Activated CD4-positive, alpha-beta T cell treated with anti-CD3 and anti-CD28 coated beads, Interleukin-2, amount 10 ng/mL, durations not matched to agents 24 days and 14 days (primary cell): ENCODE measurements at regions of chr6 and their contacts with region 1.

Region 1: DNA sequence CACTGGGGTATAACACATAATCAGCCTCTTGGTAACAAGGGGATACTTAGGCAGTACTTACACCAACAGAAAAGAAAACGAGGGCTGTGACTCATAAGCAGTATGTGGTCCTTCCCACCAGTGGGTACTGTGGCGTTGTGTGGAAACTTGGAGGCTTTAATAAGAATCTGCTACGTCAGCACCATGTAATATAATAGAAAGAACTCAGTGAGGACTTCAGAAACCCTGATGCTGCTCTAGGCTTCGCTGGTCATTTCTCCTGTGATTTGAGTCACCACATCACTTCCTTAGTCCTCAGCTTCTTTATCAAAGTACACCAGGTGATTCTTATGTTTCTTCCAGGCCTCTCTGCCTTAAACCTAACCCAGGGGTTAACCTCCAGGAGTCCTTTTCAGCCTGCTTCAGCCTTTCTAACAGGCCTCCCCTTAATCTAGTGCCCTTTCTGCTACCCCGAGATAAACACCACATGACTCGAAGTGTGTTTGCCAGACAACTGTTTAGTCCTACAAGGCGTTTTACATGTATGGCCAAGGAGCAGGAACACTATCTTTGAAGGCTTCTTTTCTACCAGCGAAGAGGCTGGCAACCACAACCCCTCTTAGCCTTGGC is 68.5 kb downstream of the FYN start:
- DNase-seq: peak; percentile 90
- H3K4me3 Mint-ChIP-seq: peak overlapping the region; percentile 82
- H3K27ac Mint-ChIP-seq: peak overlapping the region; percentile 99
- H3K4me1 Mint-ChIP-seq: peaks cover 82% of the 10 kb centered on the region
- H3K27me3 Mint-ChIP-seq: no peaks in the 10 kb centered on the region

Region 2: DNA sequence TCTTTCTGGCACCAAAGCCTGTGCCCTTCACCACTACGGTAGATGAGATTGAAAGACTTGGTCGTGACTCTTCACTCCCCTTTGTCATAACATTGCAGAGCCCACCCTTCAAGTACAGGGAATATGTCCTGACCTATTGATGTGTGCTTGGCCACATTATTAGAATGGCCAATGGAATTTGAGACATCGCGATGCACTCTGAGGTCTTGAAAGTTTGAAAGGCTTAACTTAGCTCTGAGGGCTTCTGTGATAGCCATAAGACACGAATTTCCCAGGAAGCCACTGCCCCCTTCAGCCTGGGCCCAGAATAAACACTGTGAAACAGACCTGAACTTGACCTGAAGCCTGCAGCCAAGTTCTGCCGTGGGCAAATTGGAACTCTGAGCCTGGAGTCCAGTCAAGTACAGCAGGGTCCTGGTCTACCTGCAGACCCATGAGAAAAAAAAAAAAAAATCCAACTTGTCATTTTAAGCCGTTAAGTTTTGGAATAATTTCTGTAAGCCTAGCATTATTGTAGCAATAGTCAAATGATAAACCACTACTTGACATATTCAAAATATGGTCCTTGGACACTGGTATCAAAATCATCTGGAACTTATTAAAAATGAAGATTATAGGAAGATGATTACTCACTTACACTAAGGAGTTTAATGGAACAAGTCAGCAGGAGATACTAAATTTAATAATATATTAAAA is 162.1 kb before region 1 on chr6:
- intact Hi-C with region 1: no loop called
- DNase-seq: peak; percentile 81
- H3K4me3 Mint-ChIP-seq: no peak overlapping the region
- H3K27ac Mint-ChIP-seq: no peak overlapping the region
- H3K4me1 Mint-ChIP-seq: no peaks in the 10 kb centered on the region
- H3K27me3 Mint-ChIP-seq: no peaks in the 10 kb centered on the region

Region 3: GRCh38 chr6:111709615-111710398 is 94.9 kb before region 1 on chr6:
- intact Hi-C with region 1: loop called (anchors 2 kb)
- DNase-seq: peak; percentile 85
- H3K4me3 Mint-ChIP-seq: no peak overlapping the region
- H3K27ac Mint-ChIP-seq: peak overlapping the region; percentile 59
- H3K4me1 Mint-ChIP-seq: peaks cover 56% of the 10 kb centered on the region
- H3K27me3 Mint-ChIP-seq: no peaks in the 10 kb centered on the region

Region 4: DNA sequence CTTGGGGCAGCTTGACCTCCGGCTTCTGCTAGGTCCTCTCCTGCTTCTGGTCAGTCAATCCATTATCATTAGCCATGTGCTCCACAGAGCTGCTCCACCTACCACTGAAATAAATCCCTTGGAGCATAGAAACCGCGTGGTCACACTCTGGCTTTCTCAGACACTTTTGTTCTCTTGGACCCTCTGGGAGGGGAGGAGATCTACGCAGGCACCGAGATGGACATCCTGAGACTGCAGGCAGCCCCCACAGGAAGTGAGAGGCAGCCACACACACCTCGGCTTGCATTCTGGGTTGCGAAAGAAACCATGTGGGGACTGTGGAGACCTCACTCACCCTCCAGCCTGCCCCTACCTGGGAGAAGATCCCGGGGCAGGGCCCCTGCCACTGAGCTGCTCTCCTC is 11.0 kb before region 1 on chr6:
- intact Hi-C with region 1: loop called (anchors 1 kb)
- DNase-seq: peak; percentile 80
- H3K4me3 Mint-ChIP-seq: peak overlapping the region; percentile 45
- H3K27ac Mint-ChIP-seq: peak overlapping the region; percentile 85
- H3K4me1 Mint-ChIP-seq: peaks cover 63% of the 10 kb centered on the region
- H3K27me3 Mint-ChIP-seq: no peaks in the 10 kb centered on the region

Region 5: DNA sequence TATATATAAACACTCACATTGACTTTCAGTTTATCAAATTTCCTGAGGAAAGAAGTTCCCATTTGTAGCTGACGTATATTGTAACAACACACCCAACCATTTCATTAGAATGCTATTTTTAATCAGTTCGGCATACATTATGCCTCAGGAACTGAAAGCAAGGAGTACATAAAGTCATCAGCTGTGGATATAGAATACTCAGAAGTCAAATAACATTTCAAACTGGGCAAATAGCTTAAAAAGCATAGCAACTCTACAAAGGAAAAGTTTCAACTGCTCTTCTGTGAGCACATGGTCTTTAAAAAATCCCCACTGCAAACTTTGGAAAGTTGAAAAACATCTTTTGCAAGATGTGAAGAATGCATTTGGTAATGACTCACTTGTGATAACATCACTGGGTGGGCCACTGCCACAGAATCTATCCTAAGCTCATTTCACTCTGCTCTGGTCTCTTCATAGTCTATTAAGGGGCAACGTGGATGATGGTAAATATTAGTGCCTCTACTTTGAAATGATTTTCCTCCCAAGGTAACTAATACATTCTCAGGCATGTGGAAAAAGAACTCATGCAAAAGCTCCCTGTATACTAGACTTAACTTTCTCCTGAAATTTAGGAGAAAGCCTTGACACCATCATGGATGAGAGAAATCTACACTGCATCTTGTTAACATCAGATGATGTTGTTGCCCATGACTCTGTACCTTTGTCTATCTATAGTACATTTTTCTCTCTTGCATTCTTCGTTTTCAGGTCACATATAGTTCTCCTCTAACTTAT is 19.3 kb after region 1 on chr6:
- intact Hi-C with region 1: loop called (anchors 1 kb)
- DNase-seq: peak; percentile 71
- H3K4me3 Mint-ChIP-seq: peak overlapping the region; percentile 67
- H3K27ac Mint-ChIP-seq: peak overlapping the region; percentile 91
- H3K4me1 Mint-ChIP-seq: peaks cover 70% of the 10 kb centered on the region
- H3K27me3 Mint-ChIP-seq: no peaks in the 10 kb centered on the region

Region 6: DNA sequence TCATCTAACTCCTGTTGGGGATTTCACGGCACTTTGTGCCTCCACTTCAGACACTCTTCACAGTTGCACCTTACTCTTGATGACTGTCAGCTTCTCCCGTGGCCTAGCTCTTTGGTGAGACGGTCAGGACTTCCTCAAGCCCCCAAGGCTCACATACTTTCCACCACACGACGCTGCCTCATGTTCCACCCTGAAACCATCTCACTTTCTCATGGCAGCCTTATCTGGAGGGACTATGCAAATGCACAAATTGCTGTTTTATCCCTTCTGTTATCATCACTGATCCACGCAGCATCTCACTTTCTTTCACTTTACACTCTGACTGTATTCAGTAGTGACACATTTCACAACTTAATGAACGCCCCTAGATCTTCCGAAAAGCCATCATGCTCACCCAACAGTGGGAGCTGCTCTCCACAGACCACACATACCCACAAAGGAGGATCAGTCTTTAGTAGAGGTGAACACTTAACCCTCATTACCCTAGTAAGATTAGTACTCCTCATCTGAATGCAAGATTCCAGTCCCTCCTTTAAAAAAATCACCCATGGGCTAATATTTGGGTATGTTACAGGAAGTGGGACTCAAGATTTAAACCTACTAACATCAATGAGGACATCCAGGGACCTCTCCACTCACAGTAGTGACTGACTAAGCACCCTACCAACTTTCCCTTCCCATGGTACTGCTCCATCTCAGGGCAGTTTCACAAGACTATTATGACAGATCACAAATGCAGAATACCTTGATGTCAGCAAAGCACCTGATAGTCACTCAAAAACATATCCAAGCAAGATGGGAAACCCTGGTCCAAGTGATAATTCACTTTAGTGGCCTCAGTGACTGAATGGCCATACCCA is 33.1 kb after region 1 on chr6:
- intact Hi-C with region 1: loop called (anchors 1 kb)
- DNase-seq: peak; percentile 86
- H3K4me3 Mint-ChIP-seq: peak overlapping the region; percentile 75
- H3K27ac Mint-ChIP-seq: peak overlapping the region; percentile 96
- H3K4me1 Mint-ChIP-seq: peaks cover 64% of the 10 kb centered on the region
- H3K27me3 Mint-ChIP-seq: no peaks in the 10 kb centered on the region

Region 7: DNA sequence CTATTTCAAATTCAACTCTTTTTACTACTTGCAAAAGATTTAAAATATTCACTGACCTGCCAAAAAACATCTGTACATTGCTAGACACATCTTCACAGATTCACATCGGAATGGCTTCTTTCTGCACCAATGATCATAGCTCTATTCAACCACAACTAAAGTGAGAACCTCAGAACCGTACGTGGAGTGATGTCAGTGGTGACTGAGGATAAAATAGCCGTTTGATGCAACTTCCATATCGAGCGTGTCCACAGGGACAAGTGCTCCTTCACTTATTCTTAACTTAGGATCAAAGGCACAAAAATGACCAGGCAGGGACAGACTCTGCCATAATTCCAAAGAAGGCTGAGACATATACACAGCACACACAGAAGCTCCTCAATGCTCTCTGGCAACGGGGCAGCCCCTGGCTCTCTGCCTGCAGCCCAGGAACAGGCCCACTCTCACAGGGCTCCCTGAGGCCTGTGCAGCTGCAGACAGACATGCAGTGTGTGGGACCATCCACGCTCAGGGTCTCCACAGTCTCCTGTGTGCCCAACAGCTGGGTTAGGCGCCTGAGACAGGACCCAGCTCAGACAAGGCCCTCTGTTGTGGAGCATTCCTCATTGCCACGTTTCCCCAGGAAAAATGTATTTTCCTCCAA is 45.7 kb after region 1 on chr6:
- intact Hi-C with region 1: loop called (anchors 1 kb)
- DNase-seq: no peak
- H3K4me3 Mint-ChIP-seq: peak overlapping the region; percentile 51
- H3K27ac Mint-ChIP-seq: peak overlapping the region; percentile 73
- H3K4me1 Mint-ChIP-seq: peaks cover 79% of the 10 kb centered on the region
- H3K27me3 Mint-ChIP-seq: no peaks in the 10 kb centered on the region

Region 8: GRCh38 chr6:111973118-111973761 is 168.5 kb after region 1 on chr6:
- intact Hi-C with region 1: loop called (anchors 1 kb)
- DNase-seq: peak; percentile 86
- H3K4me3 Mint-ChIP-seq: peak overlapping the region; percentile 73
- H3K27ac Mint-ChIP-seq: peak overlapping the region; percentile 86
- H3K4me1 Mint-ChIP-seq: peaks cover 51% of the 10 kb centered on the region
- H3K27me3 Mint-ChIP-seq: peaks cover 7% of the 10 kb centered on the region